Naive thymus-derived CD4-positive, alpha-beta T cell (primary cell): ENCODE measurements at regions of chr15 and their contacts with region 1.

Region 1: GRCh38 chr15:39782441-39783138 is at the start of gene FSIP1:
- DNase-seq: peak; percentile 91 to 98 (median 97)
- ATAC-seq: peak; percentile 100
- H3K4me3 ChIP-seq: peak within 1 kb of the TSS; percentile 98
- H3K4me3 Mint-ChIP-seq: peak within 1 kb of the TSS; percentile 74 to 97 (median 90)
- H3K27ac ChIP-seq: peak within 1 kb of the TSS; percentile 80
- H3K27ac Mint-ChIP-seq: peak within 1 kb of the TSS; percentile 70 to 93 (median 90)
- H3K4me1 ChIP-seq: peaks cover 14 to 19% of the 10 kb centered on the region in 2 donors
- H3K4me1 Mint-ChIP-seq: peaks cover 30 to 59% (median 46%) of the 10 kb centered on the region in 7 donors
- H3K27me3 ChIP-seq: no peaks in the 10 kb centered on the region
- H3K27me3 Mint-ChIP-seq: peaks cover 0 to 7% (median 0%) of the 10 kb centered on the region in 5 donors
- total RNA-seq, gene FSIP1: 0.14 to 0.51 (median 0.35) TPM in 4 of 5 experiments, not detected in the other

Region 2: DNA sequence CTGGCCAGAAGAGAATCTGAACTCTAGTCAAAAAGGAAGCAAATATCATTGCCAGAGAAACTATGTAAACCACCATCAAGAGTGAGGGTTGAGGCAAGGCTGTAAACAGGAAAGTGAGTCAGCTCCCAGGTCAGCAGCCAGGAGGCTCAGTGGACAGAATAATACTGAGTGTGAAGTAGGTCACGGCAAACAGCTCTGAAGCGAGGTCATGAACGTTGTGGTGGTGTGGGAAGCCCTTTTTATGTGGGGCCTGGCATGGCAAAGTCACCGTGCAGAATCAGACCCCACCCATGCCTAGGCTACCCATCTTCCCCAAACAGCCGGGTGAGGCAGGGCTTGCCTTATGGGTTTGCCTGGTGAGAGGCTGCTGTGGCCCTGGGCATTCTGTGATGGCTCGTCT is 157.8 kb before region 1 on chr15:
- CTCF ChIA-PET with region 1: no interaction called
- POLR2A ChIA-PET with region 1: interaction called, 3 read pairs
- intact Hi-C with region 1: loop called in 1 of 2 experiments (anchors 2 kb)
- DNase-seq: peak in 1 of 9 donors; percentile 63
- ATAC-seq: peak; percentile 77
- H3K4me3 ChIP-seq: no peak overlapping the region
- H3K4me3 Mint-ChIP-seq: peak overlapping the region in 2 of 10 donors; percentile 70 to 83
- H3K27ac ChIP-seq: no peak overlapping the region
- H3K27ac Mint-ChIP-seq: peak overlapping the region in 6 of 9 donors; percentile 28 to 100 (median 78)
- H3K4me1 ChIP-seq: peaks cover 15 to 80% of the 10 kb centered on the region in 2 donors
- H3K4me1 Mint-ChIP-seq: peaks cover 28 to 84% (median 33%) of the 10 kb centered on the region in 7 donors
- H3K27me3 ChIP-seq: no peaks in the 10 kb centered on the region
- H3K27me3 Mint-ChIP-seq: peaks cover 0 to 3% (median under 1%) of the 10 kb centered on the region in 5 donors

Region 3: GRCh38 chr15:39666677-39667076 is 115.9 kb before region 1 on chr15:
- CTCF ChIA-PET with region 1: no interaction called
- POLR2A ChIA-PET with region 1: no interaction called
- intact Hi-C with region 1: no loop called
- DNase-seq: no peak
- ATAC-seq: no peak
- H3K4me3 ChIP-seq: no peak overlapping the region
- H3K4me3 Mint-ChIP-seq: no peak overlapping the region
- H3K27ac ChIP-seq: no peak overlapping the region
- H3K27ac Mint-ChIP-seq: no peak overlapping the region
- H3K4me1 ChIP-seq: peaks cover 0 to 7% of the 10 kb centered on the region in 2 donors
- H3K4me1 Mint-ChIP-seq: peaks cover 0 to 10% (median 0%) of the 10 kb centered on the region in 7 donors
- H3K27me3 ChIP-seq: no peaks in the 10 kb centered on the region
- H3K27me3 Mint-ChIP-seq: peaks cover 0 to 30% (median 4%) of the 10 kb centered on the region in 5 donors

Region 4: DNA sequence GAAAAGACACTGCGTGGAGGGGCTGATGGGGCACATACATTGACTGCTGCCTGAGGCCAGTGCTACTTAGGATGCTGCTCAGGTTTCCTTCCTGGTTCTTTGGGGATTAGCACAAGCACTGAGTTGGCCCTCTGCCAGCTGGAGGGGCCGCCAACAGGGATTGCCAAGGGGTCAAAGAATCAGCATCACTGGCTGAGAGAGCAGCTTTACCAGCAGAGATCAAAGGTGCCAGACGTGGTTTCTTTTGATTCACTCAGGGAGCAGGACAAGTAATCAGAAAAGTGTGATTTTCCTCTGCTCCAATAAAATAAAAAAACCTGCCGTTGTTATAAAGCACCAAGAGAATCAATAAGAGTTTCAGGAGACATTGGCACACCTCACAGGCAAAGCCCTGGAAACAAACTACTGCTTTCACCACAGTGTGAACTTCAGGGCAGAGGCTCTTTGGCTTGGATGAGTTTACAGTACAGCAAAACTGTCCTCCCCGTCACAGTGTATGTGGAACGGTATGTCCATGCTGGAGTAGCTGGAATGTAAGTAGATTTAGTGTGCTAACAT is 45.9 kb after region 1 on chr15:
- CTCF ChIA-PET with region 1: no interaction called
- POLR2A ChIA-PET with region 1: no interaction called
- intact Hi-C with region 1: no loop called
- DNase-seq: no peak
- ATAC-seq: no peak
- H3K4me3 ChIP-seq: no peak overlapping the region
- H3K4me3 Mint-ChIP-seq: no peak overlapping the region
- H3K27ac ChIP-seq: no peak overlapping the region
- H3K27ac Mint-ChIP-seq: no peak overlapping the region
- H3K4me1 ChIP-seq: no peaks in the 10 kb centered on the region
- H3K4me1 Mint-ChIP-seq: peaks cover 0 to 2% (median 0%) of the 10 kb centered on the region in 7 donors
- H3K27me3 ChIP-seq: no peaks in the 10 kb centered on the region
- H3K27me3 Mint-ChIP-seq: peaks cover 27 to 47% (median 29%) of the 10 kb centered on the region in 5 donors

Region 5: GRCh38 chr15:40038638-40039543 is 256.3 kb after region 1 on chr15 and contains the start of gene SRP14:
- CTCF ChIA-PET with region 1: no interaction called
- POLR2A ChIA-PET with region 1: interaction called, 3 read pairs
- intact Hi-C with region 1: loop called (anchors 1 to 2 kb)
- DNase-seq: peak; percentile 74 to 93 (median 87)
- ATAC-seq: peak; percentile 98
- H3K4me3 ChIP-seq: peak within 1 kb of the TSS; percentile 86
- H3K4me3 Mint-ChIP-seq: peak within 1 kb of the TSS; percentile 92 to 100 (median 100)
- H3K27ac ChIP-seq: peak within 1 kb of the TSS; percentile 96
- H3K27ac Mint-ChIP-seq: peak within 1 kb of the TSS; percentile 94 to 99 (median 98)
- H3K4me1 ChIP-seq: peaks cover 15 to 18% of the 10 kb centered on the region in 2 donors
- H3K4me1 Mint-ChIP-seq: peaks cover 28 to 58% (median 53%) of the 10 kb centered on the region in 7 donors
- H3K27me3 ChIP-seq: no peaks in the 10 kb centered on the region
- H3K27me3 Mint-ChIP-seq: no peaks in the 10 kb centered on the region
- total RNA-seq, gene SRP14: 92.1 to 157 (median 111) TPM

Region 6: DNA sequence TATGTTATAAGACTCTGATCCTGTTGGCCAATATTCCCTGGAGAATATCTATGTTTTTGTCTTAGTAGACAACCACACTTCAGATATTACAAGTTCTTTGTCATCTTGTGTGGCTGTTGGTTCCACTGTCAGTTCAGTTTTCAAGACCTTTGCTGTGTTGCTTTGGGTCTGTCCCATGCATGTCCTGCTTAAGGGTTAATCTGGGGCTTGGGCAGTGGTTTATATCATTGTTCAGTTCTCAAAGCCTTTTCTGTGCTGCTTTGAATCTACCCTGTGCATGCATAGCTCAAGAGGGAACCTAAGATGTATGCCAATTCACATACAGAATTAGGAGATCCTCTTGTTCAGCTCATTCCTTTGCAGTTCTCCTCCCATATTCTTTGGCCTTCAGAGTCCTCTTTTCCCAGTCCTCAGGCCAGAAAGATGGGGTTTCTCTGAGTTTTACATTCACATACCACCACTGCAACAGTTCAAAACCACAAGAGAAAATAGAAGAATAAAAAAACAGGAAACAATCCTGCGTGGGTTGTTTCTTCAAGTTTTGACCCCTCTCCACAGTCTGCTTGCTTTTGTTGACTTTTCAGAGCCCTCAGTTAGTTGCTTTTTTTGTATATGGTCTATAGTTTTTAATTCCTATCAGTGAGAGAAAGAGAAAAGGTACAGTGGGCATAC is 399.9 kb after region 1 on chr15:
- CTCF ChIA-PET with region 1: no interaction called
- POLR2A ChIA-PET with region 1: no interaction called
- intact Hi-C with region 1: loop called in 1 of 2 experiments (anchors 1 kb)
- DNase-seq: no peak
- ATAC-seq: no peak
- H3K4me3 ChIP-seq: peak overlapping the region; percentile 2
- H3K4me3 Mint-ChIP-seq: peak overlapping the region in 8 of 10 donors; percentile 2 to 77 (median 24)
- H3K27ac ChIP-seq: no peak overlapping the region
- H3K27ac Mint-ChIP-seq: peak overlapping the region in 7 of 9 donors; percentile 1 to 90 (median 43)
- H3K4me1 ChIP-seq: peaks cover 17 to 22% of the 10 kb centered on the region in 2 donors
- H3K4me1 Mint-ChIP-seq: peaks cover 19 to 43% (median 21%) of the 10 kb centered on the region in 7 donors
- H3K27me3 ChIP-seq: no peaks in the 10 kb centered on the region
- H3K27me3 Mint-ChIP-seq: no peaks in the 10 kb centered on the region

Region 7: DNA sequence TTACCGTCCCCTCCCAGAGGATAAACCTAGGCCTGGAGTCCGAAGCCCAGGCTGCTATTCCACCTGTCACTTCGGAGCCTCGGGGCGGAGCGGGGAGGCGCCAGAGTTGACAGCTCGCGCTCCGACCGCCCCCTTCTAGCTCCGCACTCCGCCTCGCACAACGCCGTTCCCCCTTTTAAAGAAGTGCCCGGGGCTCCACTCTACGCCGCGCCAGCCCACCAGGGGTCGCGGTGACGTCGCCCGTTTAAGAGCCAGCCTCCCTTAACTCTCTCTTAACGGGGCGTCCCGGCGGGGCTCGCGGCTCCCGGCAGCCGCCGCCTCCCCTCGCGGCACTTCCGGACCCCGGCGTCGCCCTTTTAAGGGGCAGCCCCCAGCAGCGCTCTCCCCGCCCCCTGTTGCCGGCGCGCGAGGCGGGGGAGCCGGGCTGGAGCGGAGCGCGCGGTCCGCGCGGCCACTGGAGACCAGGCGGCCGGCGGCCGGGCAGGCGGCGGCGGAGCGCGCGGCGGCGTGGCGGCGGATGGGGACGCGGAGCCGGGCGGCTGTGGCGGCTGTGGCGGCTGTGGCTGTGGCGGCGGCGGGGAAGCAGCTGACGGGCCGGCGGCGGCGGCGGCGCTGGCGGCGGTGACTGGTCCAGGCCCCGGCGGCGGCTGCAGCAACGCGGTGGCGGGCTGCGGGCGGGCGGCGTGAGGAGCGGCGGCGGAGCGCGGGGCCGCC is 540.8 kb after region 1 on chr15 and contains the start of gene INAFM2:
- CTCF ChIA-PET with region 1: no interaction called
- POLR2A ChIA-PET with region 1: no interaction called
- intact Hi-C with region 1: loop called (anchors 2 to 5 kb)
- DNase-seq: peak; percentile 77 to 91 (median 89)
- ATAC-seq: peak; percentile 95
- H3K4me3 ChIP-seq: peak within 1 kb of the TSS; percentile 34
- H3K4me3 Mint-ChIP-seq: peak within 1 kb of the TSS; percentile 69 to 89 (median 84)
- H3K27ac ChIP-seq: peak within 1 kb of the TSS; percentile 66
- H3K27ac Mint-ChIP-seq: peak within 1 kb of the TSS in 8 of 9 donors; percentile 56 to 86 (median 80)
- H3K4me1 ChIP-seq: peaks cover 15% of the 10 kb centered on the region in 2 donors
- H3K4me1 Mint-ChIP-seq: peaks cover 19 to 51% (median 43%) of the 10 kb centered on the region in 7 donors
- H3K27me3 ChIP-seq: no peaks in the 10 kb centered on the region
- H3K27me3 Mint-ChIP-seq: peaks cover 0 to 23% (median 0%) of the 10 kb centered on the region in 5 donors
- total RNA-seq, gene INAFM2: 7.1 to 21.2 (median 12.7) TPM

Region 8: GRCh38 chr15:40525855-40526254 is 743.3 kb after region 1 on chr15:
- CTCF ChIA-PET with region 1: no interaction called
- POLR2A ChIA-PET with region 1: no interaction called
- intact Hi-C with region 1: no loop called
- DNase-seq: no peak
- ATAC-seq: no peak
- H3K4me3 ChIP-seq: no peak overlapping the region
- H3K4me3 Mint-ChIP-seq: no peak overlapping the region
- H3K27ac ChIP-seq: no peak overlapping the region
- H3K27ac Mint-ChIP-seq: no peak overlapping the region
- H3K4me1 ChIP-seq: no peaks in the 10 kb centered on the region
- H3K4me1 Mint-ChIP-seq: peaks cover 0 to 4% (median 0%) of the 10 kb centered on the region in 7 donors
- H3K27me3 ChIP-seq: no peaks in the 10 kb centered on the region
- H3K27me3 Mint-ChIP-seq: peaks cover 0 to 9% (median 0%) of the 10 kb centered on the region in 5 donors